ENCODE measurements at regions of chr2 and their contacts with region 1.

Region 1: DNA sequence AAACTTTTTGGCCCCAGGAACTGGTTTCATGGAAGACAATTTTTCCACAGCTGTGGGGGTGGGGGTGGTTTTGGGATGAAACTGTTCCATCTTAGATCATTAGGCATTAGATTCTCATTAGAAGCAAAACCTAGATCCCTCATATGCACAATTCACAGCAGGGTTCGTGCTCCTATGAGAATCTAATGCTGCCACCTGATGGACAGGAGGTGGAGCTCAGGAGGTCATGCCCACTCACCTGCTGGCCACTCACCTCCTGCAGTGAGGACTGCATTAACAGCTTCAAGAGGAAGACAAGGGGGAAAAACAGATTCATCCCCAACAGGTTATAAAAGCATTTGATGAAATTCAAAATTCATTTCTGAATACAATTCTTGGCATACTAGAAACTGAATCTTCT is 38.5 kb downstream of the THAP4 start:
- DNase-seq: no peak
- CTCF ChIP-seq: peak; percentile 42

Region 2: GRCh38 chr2:241609859-241610793 is 11.6 kb after region 1 on chr2:
- CTCF ChIA-PET with region 1: interaction called, 12 read pairs
- POLR2A ChIA-PET with region 1: interaction called, 5 read pairs
- DNase-seq: peak; percentile 95
- CTCF ChIP-seq: peak; percentile 91

Region 3: GRCh38 chr2:241692448-241692847 is 94.0 kb after region 1 on chr2:
- CTCF ChIA-PET with region 1: no interaction called
- POLR2A ChIA-PET with region 1: no interaction called
- DNase-seq: no peak
- CTCF ChIP-seq: no peak

Region 4: DNA sequence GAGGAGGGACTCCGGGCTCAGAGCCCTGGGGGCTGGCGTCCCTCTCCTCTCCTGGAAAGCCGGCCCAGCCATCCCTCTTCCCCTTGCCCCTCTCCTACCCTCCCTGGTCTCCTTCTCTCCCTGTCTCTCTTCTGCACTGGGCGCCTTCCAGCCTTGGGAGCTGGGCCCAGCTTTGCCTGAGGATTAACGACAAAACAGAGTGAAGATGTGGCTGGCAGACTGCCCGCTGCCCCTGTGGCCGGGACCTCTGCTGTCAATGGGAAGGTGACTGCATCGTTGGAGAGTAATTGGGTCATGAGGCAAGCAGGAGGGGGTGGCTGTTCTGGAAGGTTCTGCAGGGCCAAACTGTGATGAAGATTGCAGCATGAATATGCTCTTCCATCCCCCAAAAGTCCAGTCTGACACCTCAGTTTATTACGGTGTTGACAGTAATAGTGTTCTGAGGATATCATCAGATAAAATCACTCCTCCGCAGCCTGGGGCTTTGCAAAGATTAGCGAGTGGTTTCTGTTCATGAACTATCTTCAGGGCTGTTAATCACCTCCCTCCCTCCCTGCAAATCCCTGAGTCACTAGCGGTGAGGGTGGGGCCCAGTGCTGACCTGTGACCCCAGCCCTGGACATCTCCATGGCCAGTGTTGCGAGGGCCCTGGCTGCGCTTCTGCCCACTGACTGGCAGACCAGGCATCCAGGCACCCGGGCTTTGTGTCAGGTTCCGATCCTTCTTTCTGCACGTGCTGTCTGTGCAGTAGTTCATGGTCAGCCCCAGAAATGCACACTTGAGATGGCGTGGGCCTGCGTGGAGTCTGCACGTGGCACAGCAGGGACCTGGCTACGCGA is 294.0 kb after region 1 on chr2:
- CTCF ChIA-PET with region 1: no interaction called
- POLR2A ChIA-PET with region 1: no interaction called
- DNase-seq: no peak
- CTCF ChIP-seq: no peak